CD14-positive monocyte (primary cell): ENCODE measurements at regions of chr1 and their contacts with region 1.

Region 1: GRCh38 chr1:110053557-110054428 is 16.7 kb downstream of the ALX3 start:
- DNase-seq: peak; percentile 37 to 55 (median 43)
- H3K4me3 ChIP-seq: no peak overlapping the region
- H3K4me3 Mint-ChIP-seq: no peak overlapping the region
- H3K27ac ChIP-seq: no peak overlapping the region
- H3K27ac Mint-ChIP-seq: no peak overlapping the region
- H3K4me1 ChIP-seq: peaks cover 10 to 11% of the 10 kb centered on the region in 2 donors
- H3K4me1 Mint-ChIP-seq: peaks cover 10% of the 10 kb centered on the region
- H3K27me3 ChIP-seq: no peaks in the 10 kb centered on the region
- H3K27me3 Mint-ChIP-seq: no peaks in the 10 kb centered on the region
- CTCF ChIP-seq: peak; percentile 98

Region 2: GRCh38 chr1:110034451-110035235 is 19.1 kb before region 1 on chr1 and contains the start of gene STRIP1:
- intact Hi-C with region 1: no loop called
- DNase-seq: peak; percentile 95 to 97 (median 96)
- H3K4me3 ChIP-seq: peak within 1 kb of the TSS; percentile 67 to 94 (median 83)
- H3K4me3 Mint-ChIP-seq: peak within 1 kb of the TSS; percentile 88 to 94
- H3K27ac ChIP-seq: peak within 1 kb of the TSS; percentile 57 to 88
- H3K27ac Mint-ChIP-seq: peak within 1 kb of the TSS; percentile 83 to 95 (median 90)
- H3K4me1 ChIP-seq: peaks cover 16 to 33% of the 10 kb centered on the region in 2 donors
- H3K4me1 Mint-ChIP-seq: peaks cover 36% of the 10 kb centered on the region
- H3K27me3 ChIP-seq: no peaks in the 10 kb centered on the region
- H3K27me3 Mint-ChIP-seq: peaks cover 0 to 1% (median 0%) of the 10 kb centered on the region in 3 donors
- CTCF ChIP-seq: no peak
- polyA plus RNA-seq, gene STRIP1: 8.9 to 33.6 (median 11.0) TPM

Region 3: GRCh38 chr1:110106013-110106941 is 52.5 kb after region 1 on chr1:
- intact Hi-C with region 1: loop called (anchors 1 to 5 kb)
- DNase-seq: peak; percentile 43 to 63 (median 53)
- H3K4me3 ChIP-seq: no peak overlapping the region
- H3K4me3 Mint-ChIP-seq: no peak overlapping the region
- H3K27ac ChIP-seq: no peak overlapping the region
- H3K27ac Mint-ChIP-seq: no peak overlapping the region
- H3K4me1 ChIP-seq: peaks cover 16 to 17% of the 10 kb centered on the region in 2 donors
- H3K4me1 Mint-ChIP-seq: peaks cover 19% of the 10 kb centered on the region
- H3K27me3 ChIP-seq: no peaks in the 10 kb centered on the region
- H3K27me3 Mint-ChIP-seq: peaks cover 8 to 25% (median 11%) of the 10 kb centered on the region in 3 donors
- CTCF ChIP-seq: peak; percentile 89